HepG2 (cell line): ENCODE measurements at regions of chr11 and their contacts with region 1.

Region 1: GRCh38 chr11:45180179-45180842 is 33.9 kb downstream of the PRDM11 start:
- DNase-seq: no peak
- ATAC-seq: peak; percentile 73
- H3K4me3 ChIP-seq: peak overlapping the region; percentile 24 to 71 (median 58); a peak in 5 of 6 replicates
- H3K27ac ChIP-seq: peak overlapping the region; percentile 74
- H3K4me1 ChIP-seq: peaks cover 16% of the 10 kb centered on the region
- H3K27me3 ChIP-seq: no peaks in the 10 kb centered on the region; a peak in 1 of 5 replicates
- CTCF ChIP-seq: peak; percentile 47
- EP300 ChIP-seq: no peak
- POLR2A ChIP-seq: no peak; a peak in 1 of 4 replicates
- RAD21 ChIP-seq: peak; percentile 16; the same call in 1 of the 2 replicates

Region 2: DNA sequence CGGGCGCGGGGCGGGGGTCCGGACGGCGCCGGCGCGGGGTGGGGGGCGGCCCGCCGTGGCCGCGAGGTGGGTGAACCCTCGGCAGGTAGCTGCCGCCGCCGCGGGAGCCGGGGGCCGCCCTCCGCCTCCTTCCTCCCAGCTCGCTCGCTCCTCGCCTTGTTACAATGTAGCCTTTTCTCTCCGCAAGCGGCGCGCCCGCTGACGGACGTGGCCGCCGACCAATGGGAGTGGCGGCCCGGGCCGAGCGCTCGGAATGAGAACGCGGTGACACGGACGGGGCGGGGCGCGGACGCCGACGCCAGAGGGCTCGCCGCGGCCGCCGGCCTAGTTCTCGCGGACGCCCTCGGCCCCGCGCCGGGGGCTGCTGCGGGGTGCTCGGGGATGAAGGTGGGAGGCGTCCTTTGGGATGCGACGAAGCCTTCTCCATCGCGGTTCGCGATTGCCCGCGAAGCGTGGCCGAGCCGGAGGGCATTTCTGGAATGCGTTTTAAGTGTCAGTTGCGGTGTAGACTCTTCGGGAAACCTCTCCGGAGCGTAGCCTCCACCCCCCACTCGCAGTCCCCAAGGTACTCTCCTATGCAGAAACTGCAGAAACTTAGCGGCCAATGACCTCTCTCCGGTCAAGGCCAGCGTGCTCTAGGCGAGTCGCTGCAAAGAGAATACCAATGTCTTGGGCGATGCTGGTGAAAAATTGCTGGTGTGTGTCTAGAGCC is 33.1 kb before region 1 on chr11:
- CTCF ChIA-PET with region 1: no interaction called
- POLR2A ChIA-PET with region 1: interaction called, 9 read pairs
- in situ Hi-C with region 1: no loop called
- intact Hi-C with region 1: loop called (anchors 2 kb)
- DNase-seq: peak; percentile 87
- ATAC-seq: peak; percentile 98
- H3K4me3 ChIP-seq: peak overlapping the region; percentile 67 to 82 (median 79)
- H3K27ac ChIP-seq: peak overlapping the region; percentile 56
- H3K4me1 ChIP-seq: peaks cover 24% of the 10 kb centered on the region
- H3K27me3 ChIP-seq: peaks cover 2 to 25% of the 10 kb centered on the region in 2 experiments; a peak in 3 of 5 replicates
- CTCF ChIP-seq: no peak; the same call in 1 of the 2 replicates
- EP300 ChIP-seq: no peak
- POLR2A ChIP-seq: peak; percentile 83 to 87
- RAD21 ChIP-seq: peak; percentile 40; the same call in 1 of the 2 replicates

Region 3: GRCh38 chr11:45289369-45289768 is 109.1 kb after region 1 on chr11:
- CTCF ChIA-PET with region 1: interaction called, 4 read pairs
- POLR2A ChIA-PET with region 1: no interaction called
- in situ Hi-C with region 1: no loop called
- intact Hi-C with region 1: loop called (anchors 1 kb)
- DNase-seq: no peak
- ATAC-seq: no peak
- H3K4me3 ChIP-seq: no peak overlapping the region
- H3K27ac ChIP-seq: no peak overlapping the region
- H3K4me1 ChIP-seq: no peaks in the 10 kb centered on the region
- H3K27me3 ChIP-seq: peaks cover 4 to 27% of the 10 kb centered on the region in 2 experiments; a peak in 4 of 5 replicates
- CTCF ChIP-seq: no peak
- EP300 ChIP-seq: no peak
- POLR2A ChIP-seq: no peak
- RAD21 ChIP-seq: no peak